CD4-positive, alpha-beta memory T cell (primary cell): ENCODE measurements at regions of chr22 and their contacts with region 1.

Region 1: GRCh38 chr22:40856513-40857308 is at the starts of genes ST13 and XPNPEP3:
- DNase-seq: peak; percentile 97 to 98 (median 98)
- H3K4me3 ChIP-seq: peak within 1 kb of the TSS; percentile 72 to 100
- H3K4me3 Mint-ChIP-seq: peak within 1 kb of the TSS; percentile 96 to 99 (median 98)
- H3K27ac ChIP-seq: peak within 1 kb of the TSS; percentile 99
- H3K27ac Mint-ChIP-seq: peak within 1 kb of the TSS; percentile 98 to 100 (median 100)
- H3K4me1 ChIP-seq: peaks cover 53% of the 10 kb centered on the region
- H3K4me1 Mint-ChIP-seq: peaks cover 23 to 66% (median 45%) of the 10 kb centered on the region in 4 donors
- H3K27me3 ChIP-seq: no peaks in the 10 kb centered on the region
- H3K27me3 Mint-ChIP-seq: peaks cover 0 to 2% of the 10 kb centered on the region in 2 donors
- total RNA-seq, gene ST13: 161 to 168 TPM
- total RNA-seq, gene XPNPEP3: 18.6 to 20.0 TPM

Region 2: GRCh38 chr22:40668611-40669411 is 187.9 kb before region 1 on chr22:
- CTCF ChIA-PET with region 1: no interaction called
- POLR2A ChIA-PET with region 1: no interaction called
- intact Hi-C with region 1: no loop called
- DNase-seq: no peak
- H3K4me3 ChIP-seq: no peak overlapping the region
- H3K4me3 Mint-ChIP-seq: peak overlapping the region in 1 of 8 donors; percentile 33
- H3K27ac ChIP-seq: no peak overlapping the region
- H3K27ac Mint-ChIP-seq: peak overlapping the region in 2 of 7 donors; percentile 54 to 74
- H3K4me1 ChIP-seq: no peaks in the 10 kb centered on the region
- H3K4me1 Mint-ChIP-seq: peaks cover 4 to 12% (median 9%) of the 10 kb centered on the region in 4 donors
- H3K27me3 ChIP-seq: no peaks in the 10 kb centered on the region
- H3K27me3 Mint-ChIP-seq: no peaks in the 10 kb centered on the region

Region 3: DNA sequence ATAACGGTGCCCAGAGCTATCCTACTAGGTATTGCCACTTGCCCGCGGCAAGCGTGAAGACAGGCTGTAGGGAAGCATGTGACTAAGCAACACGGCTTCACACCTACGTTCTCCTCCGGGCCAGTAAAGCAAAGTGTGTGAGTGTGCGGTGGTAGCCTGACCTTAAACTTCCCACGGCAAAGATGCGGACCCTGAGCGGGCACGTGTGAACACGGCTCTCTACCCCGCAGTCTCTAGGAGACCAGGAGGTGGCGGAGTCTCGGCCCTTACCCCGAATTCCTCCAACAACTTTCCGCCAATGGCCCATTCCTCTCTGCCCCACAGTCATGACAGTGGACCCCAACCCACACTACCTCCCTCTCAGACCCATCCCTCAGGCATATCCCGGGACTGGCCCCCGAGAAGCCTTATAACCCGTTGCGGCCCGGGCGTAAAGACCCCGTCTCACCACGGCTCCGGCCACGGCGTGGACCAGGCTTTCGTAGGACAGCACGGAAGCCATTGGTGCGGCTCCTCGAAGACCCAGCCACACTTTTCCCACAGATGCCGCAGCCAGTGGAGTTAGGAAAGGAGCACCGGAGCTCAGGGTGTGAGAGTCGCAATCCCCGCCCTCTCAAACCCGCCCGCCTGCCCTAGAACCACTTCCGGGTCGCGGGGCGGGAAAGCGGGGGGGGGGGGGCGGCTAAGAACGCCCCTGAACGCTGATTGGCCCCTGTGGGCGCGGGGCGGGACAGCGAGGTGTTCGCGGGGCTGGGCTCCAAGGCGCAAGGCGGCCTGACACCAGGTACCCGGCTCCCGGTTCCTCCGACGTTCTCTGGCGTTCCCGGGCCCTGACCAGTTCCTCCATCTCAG is 37.7 kb before region 1 on chr22 and contains the start of gene SLC25A17:
- CTCF ChIA-PET with region 1: interaction called, 3 read pairs
- POLR2A ChIA-PET with region 1: interaction called, 28 read pairs
- intact Hi-C with region 1: loop called (anchors 1 kb)
- DNase-seq: peak; percentile 81 to 84 (median 82)
- H3K4me3 ChIP-seq: peak within 1 kb of the TSS; percentile 92 to 95
- H3K4me3 Mint-ChIP-seq: peak within 1 kb of the TSS; percentile 92 to 99 (median 97)
- H3K27ac ChIP-seq: peak within 1 kb of the TSS; percentile 81
- H3K27ac Mint-ChIP-seq: peak within 1 kb of the TSS; percentile 82 to 98 (median 95)
- H3K4me1 ChIP-seq: peaks cover 27% of the 10 kb centered on the region
- H3K4me1 Mint-ChIP-seq: peaks cover 29 to 46% (median 36%) of the 10 kb centered on the region in 4 donors
- H3K27me3 ChIP-seq: no peaks in the 10 kb centered on the region
- H3K27me3 Mint-ChIP-seq: no peaks in the 10 kb centered on the region
- total RNA-seq, gene SLC25A17: 15.4 to 15.6 TPM

Region 4: DNA sequence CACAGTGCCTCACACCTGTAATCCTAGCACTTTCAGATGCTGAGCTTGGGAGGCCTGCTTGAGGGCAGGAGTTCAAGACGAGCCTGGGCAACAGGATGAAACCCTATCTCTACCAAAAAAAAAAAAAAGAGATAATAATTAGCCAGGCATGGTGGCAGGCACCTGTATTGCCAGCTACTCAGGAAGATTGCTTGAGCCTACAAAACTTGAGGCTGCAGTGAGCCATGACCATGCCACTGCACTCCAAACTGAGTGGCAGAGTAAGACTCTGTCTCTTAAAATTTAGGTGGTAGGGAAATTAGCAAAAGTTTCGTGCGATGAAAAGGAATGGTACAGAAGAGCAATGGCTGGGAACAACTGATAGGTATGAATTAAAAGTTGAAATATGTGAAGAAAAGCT is 18.2 kb before region 1 on chr22:
- CTCF ChIA-PET with region 1: no interaction called
- POLR2A ChIA-PET with region 1: interaction called, 3 read pairs
- intact Hi-C with region 1: loop called (anchors 2 kb)
- DNase-seq: no peak
- H3K4me3 ChIP-seq: no peak overlapping the region
- H3K4me3 Mint-ChIP-seq: no peak overlapping the region
- H3K27ac ChIP-seq: no peak overlapping the region
- H3K27ac Mint-ChIP-seq: no peak overlapping the region
- H3K4me1 ChIP-seq: no peaks in the 10 kb centered on the region
- H3K4me1 Mint-ChIP-seq: peaks cover 0 to 12% (median 6%) of the 10 kb centered on the region in 4 donors
- H3K27me3 ChIP-seq: no peaks in the 10 kb centered on the region
- H3K27me3 Mint-ChIP-seq: no peaks in the 10 kb centered on the region

Region 5: DNA sequence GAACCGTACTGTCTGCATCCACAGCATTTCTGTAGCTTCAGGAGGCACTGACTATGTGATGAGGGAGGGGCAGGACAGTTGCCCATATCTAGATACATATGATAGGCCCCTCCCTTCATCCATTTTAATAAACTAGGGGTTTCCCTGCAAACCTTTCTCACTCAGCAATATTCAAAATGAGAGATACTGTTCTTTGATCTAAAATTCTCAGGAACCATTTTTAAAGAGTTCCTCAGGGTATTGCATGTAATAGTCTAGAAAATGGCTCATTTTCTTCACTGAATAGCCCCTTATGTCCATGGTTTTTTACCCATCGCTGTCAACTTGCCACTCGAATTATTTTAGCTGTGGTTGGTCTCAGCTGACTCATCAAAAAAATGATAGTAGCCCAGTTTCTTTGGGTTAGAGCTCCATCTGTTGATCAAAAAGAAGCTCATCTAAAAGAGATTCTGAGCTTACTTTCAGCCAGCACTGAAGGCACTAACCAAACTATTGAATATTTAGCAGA is 42.2 kb after region 1 on chr22:
- CTCF ChIA-PET with region 1: interaction called, 5 read pairs
- POLR2A ChIA-PET with region 1: interaction called, 5 read pairs
- intact Hi-C with region 1: loop called (anchors 1 kb)
- DNase-seq: peak; percentile 41 to 54 (median 45)
- H3K4me3 ChIP-seq: no peak overlapping the region
- H3K4me3 Mint-ChIP-seq: peak overlapping the region in 2 of 8 donors; percentile 21 to 26
- H3K27ac ChIP-seq: no peak overlapping the region
- H3K27ac Mint-ChIP-seq: peak overlapping the region in 4 of 7 donors; percentile 1 to 67 (median 30)
- H3K4me1 ChIP-seq: peaks cover 4% of the 10 kb centered on the region
- H3K4me1 Mint-ChIP-seq: peaks cover 4 to 8% (median 7%) of the 10 kb centered on the region in 4 donors
- H3K27me3 ChIP-seq: no peaks in the 10 kb centered on the region
- H3K27me3 Mint-ChIP-seq: no peaks in the 10 kb centered on the region

Region 6: GRCh38 chr22:41001722-41002122 is 145.0 kb after region 1 on chr22:
- CTCF ChIA-PET with region 1: no interaction called
- POLR2A ChIA-PET with region 1: no interaction called
- intact Hi-C with region 1: no loop called
- DNase-seq: no peak
- H3K4me3 ChIP-seq: no peak overlapping the region
- H3K4me3 Mint-ChIP-seq: no peak overlapping the region
- H3K27ac ChIP-seq: no peak overlapping the region
- H3K27ac Mint-ChIP-seq: no peak overlapping the region
- H3K4me1 ChIP-seq: no peaks in the 10 kb centered on the region
- H3K4me1 Mint-ChIP-seq: no peaks in the 10 kb centered on the region
- H3K27me3 ChIP-seq: no peaks in the 10 kb centered on the region
- H3K27me3 Mint-ChIP-seq: no peaks in the 10 kb centered on the region

Region 7: DNA sequence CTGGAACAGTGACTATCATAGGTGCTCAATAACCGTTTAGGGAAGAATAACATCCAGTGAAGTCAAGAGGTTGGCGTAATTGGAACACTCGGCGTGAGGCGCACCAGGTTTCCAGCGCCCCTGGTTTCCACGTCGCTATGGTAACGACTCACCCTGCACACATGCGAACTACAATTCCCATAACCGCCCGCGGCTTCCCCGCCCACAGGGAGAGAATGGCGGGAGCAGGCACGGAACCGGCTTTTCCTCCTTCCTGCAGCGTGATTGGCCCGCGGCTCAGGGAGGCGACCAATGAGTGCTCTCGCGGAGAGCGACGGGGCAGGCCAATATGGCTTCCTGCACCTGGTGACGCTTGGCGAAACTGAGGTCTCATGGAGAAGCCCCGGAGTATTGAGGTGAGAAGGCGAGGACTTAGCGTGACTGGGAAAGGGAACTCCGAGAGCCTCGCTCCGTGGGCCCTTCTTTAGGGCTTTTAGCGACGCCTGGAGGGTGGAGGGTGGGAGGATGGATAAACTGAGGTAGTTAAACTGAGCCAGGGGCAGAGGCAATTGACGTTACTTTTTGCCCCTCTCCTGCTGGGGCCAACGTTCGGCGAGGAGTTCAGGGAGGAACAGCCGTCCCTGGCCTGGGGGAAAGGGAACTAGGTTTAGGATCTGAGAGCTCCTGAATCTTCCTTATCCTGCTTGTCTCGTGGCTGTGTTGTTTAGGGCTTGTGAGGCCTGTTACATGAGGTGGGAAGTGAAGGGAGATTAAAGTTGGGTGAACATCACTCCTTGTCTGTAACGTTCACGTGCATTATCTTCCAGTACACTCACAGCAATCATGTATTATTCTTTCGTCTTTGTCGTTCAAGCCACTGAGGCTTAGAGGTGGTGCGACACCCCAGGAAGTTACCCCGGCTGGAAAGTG is 348.5 kb after region 1 on chr22 and contains the start of gene L3MBTL2:
- CTCF ChIA-PET with region 1: no interaction called
- POLR2A ChIA-PET with region 1: no interaction called
- intact Hi-C with region 1: loop called (anchors 1 kb)
- DNase-seq: peak; percentile 97 to 99 (median 98)
- H3K4me3 ChIP-seq: peak within 1 kb of the TSS; percentile 73 to 95
- H3K4me3 Mint-ChIP-seq: peak within 1 kb of the TSS; percentile 93 to 99 (median 96)
- H3K27ac ChIP-seq: peak within 1 kb of the TSS; percentile 85
- H3K27ac Mint-ChIP-seq: peak within 1 kb of the TSS; percentile 84 to 97 (median 93)
- H3K4me1 ChIP-seq: peaks cover 18% of the 10 kb centered on the region
- H3K4me1 Mint-ChIP-seq: peaks cover 15 to 40% (median 23%) of the 10 kb centered on the region in 4 donors
- H3K27me3 ChIP-seq: no peaks in the 10 kb centered on the region
- H3K27me3 Mint-ChIP-seq: peaks cover 3 to 6% of the 10 kb centered on the region in 2 donors
- total RNA-seq, gene L3MBTL2: 42.7 to 48.2 TPM